ENCODE measurements at regions of chr19 and their contacts with region 1.

Region 1: GRCh38 chr19:14614099-14614412 is 31.2 kb downstream of the CLEC17A start:
- DNase-seq: peak; percentile 90 to 97 (median 96)
- H3K4me3 ChIP-seq: peak overlapping the region in 1 of 3 experiments; percentile 47
- H3K4me3 Mint-ChIP-seq: peak overlapping the region; percentile 32 to 70
- H3K27ac ChIP-seq: peak overlapping the region; percentile 84 to 89
- H3K27ac Mint-ChIP-seq: peak overlapping the region; percentile 96 to 99 (median 98)
- H3K4me1 ChIP-seq: peaks cover 74 to 87% of the 10 kb centered on the region in 2 donors
- H3K4me1 Mint-ChIP-seq: peaks cover 78% of the 10 kb centered on the region
- H3K27me3 ChIP-seq: no peaks in the 10 kb centered on the region
- H3K27me3 Mint-ChIP-seq: no peaks in the 10 kb centered on the region
- CTCF ChIP-seq: no peak

Region 2: GRCh38 chr19:14425696-14426138 is 188.3 kb before region 1 on chr19:
- intact Hi-C with region 1: no loop called
- DNase-seq: no peak
- H3K4me3 ChIP-seq: no peak overlapping the region
- H3K4me3 Mint-ChIP-seq: no peak overlapping the region
- H3K27ac ChIP-seq: no peak overlapping the region
- H3K27ac Mint-ChIP-seq: no peak overlapping the region
- H3K4me1 ChIP-seq: peaks cover 24 to 26% of the 10 kb centered on the region in 2 donors
- H3K4me1 Mint-ChIP-seq: peaks cover 24% of the 10 kb centered on the region
- H3K27me3 ChIP-seq: peaks cover 0 to under 1% of the 10 kb centered on the region in 2 donors
- H3K27me3 Mint-ChIP-seq: peaks cover 4 to 12% (median 4%) of the 10 kb centered on the region in 3 donors
- CTCF ChIP-seq: no peak

Region 3: DNA sequence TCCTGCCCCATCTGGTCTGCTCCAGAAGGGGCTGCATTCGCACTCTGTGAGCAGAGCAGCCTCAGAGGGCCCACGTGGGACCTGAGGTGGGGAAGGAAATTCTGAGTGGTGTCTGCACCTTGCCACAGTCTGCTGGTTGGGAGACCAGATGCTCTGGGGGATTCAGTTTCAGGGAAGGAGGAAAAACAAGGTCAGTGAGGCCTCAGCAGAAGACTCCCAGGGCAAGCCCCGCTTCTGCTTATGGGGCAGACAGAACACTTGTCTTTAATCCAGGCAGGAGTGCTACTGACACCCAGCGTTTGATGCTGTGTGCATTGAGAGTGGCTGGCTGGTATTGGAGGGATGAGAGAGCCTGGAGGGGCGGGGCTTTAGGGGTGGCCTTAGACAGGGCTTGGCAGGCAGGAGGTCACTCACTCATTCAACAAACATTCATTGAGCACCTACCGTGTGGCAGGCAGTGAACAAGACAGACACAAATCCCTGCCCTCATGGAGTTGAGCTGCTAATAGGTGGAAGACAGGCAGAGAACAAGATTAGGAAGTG is 36.1 kb before region 1 on chr19:
- intact Hi-C with region 1: loop called (anchors 2 to 5 kb)
- DNase-seq: no peak
- H3K4me3 ChIP-seq: no peak overlapping the region
- H3K4me3 Mint-ChIP-seq: no peak overlapping the region
- H3K27ac ChIP-seq: no peak overlapping the region
- H3K27ac Mint-ChIP-seq: peak overlapping the region in 1 of 7 donors; percentile 7
- H3K4me1 ChIP-seq: peaks cover 16 to 18% of the 10 kb centered on the region in 2 donors
- H3K4me1 Mint-ChIP-seq: peaks cover 23% of the 10 kb centered on the region
- H3K27me3 ChIP-seq: no peaks in the 10 kb centered on the region
- H3K27me3 Mint-ChIP-seq: peaks cover 0 to 2% (median 1%) of the 10 kb centered on the region in 3 donors
- CTCF ChIP-seq: no peak

Region 4: DNA sequence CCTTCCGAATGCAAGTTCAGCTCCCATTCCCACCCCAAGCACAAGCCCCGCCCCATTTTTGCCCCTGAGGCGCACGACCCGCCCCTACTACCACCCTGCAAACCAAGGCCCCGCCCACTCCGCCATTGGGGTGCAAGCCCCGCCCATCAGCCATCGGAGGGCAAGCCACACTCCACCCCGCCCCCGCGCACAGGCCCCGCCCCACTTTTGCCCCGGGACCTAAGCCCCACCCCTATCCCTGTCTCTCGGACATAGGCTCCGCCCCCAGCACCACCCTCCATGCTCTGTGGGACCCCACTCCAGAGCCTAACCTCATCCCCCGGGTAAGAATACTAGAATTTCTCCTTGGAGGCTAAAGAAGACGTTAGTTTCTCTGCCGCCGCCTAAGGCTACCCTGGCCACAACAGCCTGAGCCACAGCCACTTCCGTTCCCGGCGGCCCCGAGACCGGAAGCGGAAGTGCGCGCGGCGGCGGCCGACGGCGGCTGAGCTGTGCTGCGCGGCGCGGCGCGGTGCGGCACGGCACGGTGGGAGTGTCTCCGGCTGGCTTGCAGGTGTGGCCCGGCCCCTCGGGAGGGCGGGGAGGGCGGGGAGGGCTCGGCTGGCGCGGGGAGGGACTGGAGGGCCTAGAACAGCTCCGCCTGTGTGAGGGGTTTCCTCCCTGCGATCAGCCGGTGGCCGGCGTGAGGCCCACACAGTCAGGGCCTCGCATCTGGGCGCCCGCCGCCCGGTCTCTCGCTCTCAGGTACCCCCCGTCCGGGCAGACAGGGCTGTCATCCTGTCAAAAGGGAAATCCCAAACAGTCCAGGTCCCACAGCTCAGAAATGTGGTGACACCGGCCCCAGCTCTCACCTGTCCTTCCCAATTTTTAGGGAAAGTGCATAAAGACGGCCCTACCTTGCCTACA is 75.8 kb after region 1 on chr19 and contains the start of gene ZNF333:
- intact Hi-C with region 1: loop called (anchors 5 to 10 kb)
- DNase-seq: peak; percentile 79 to 83 (median 83)
- H3K4me3 ChIP-seq: peak within 1 kb of the TSS; percentile 62 to 89 (median 85)
- H3K4me3 Mint-ChIP-seq: peak within 1 kb of the TSS; percentile 92 to 96
- H3K27ac ChIP-seq: peak within 1 kb of the TSS; percentile 93 to 95
- H3K27ac Mint-ChIP-seq: peak within 1 kb of the TSS; percentile 96 to 100 (median 100)
- H3K4me1 ChIP-seq: peaks cover 29 to 36% of the 10 kb centered on the region in 2 donors
- H3K4me1 Mint-ChIP-seq: peaks cover 34% of the 10 kb centered on the region
- H3K27me3 ChIP-seq: no peaks in the 10 kb centered on the region
- H3K27me3 Mint-ChIP-seq: no peaks in the 10 kb centered on the region
- CTCF ChIP-seq: no peak
- polyA plus RNA-seq, gene ZNF333: 7.6 to 43.0 (median 9.3) TPM

Region 5: GRCh38 chr19:15072930-15073647 is 459.0 kb after region 1 on chr19:
- intact Hi-C with region 1: no loop called
- DNase-seq: no peak
- H3K4me3 ChIP-seq: no peak overlapping the region
- H3K4me3 Mint-ChIP-seq: no peak overlapping the region
- H3K27ac ChIP-seq: no peak overlapping the region
- H3K27ac Mint-ChIP-seq: no peak overlapping the region
- H3K4me1 ChIP-seq: no peaks in the 10 kb centered on the region
- H3K4me1 Mint-ChIP-seq: no peaks in the 10 kb centered on the region
- H3K27me3 ChIP-seq: peaks cover 0 to 3% of the 10 kb centered on the region in 2 donors
- H3K27me3 Mint-ChIP-seq: peaks cover 0 to 16% (median 0%) of the 10 kb centered on the region in 3 donors
- CTCF ChIP-seq: no peak

Measured in CD14-positive monocyte (primary cell).